ENCODE measurements at regions of chr6 and their contacts with region 1.

Region 1: GRCh38 chr6:80742481-80742880 is 636.0 kb downstream of the BCKDHB start:
- DNase-seq: peak; percentile 19
- H3K4me3 ChIP-seq: no peak overlapping the region
- H3K27ac ChIP-seq: no peak overlapping the region
- H3K4me1 ChIP-seq: no peaks in the 10 kb centered on the region
- H3K27me3 ChIP-seq: no peaks in the 10 kb centered on the region
- CTCF ChIP-seq: peak; percentile 16 to 47

Region 2: DNA sequence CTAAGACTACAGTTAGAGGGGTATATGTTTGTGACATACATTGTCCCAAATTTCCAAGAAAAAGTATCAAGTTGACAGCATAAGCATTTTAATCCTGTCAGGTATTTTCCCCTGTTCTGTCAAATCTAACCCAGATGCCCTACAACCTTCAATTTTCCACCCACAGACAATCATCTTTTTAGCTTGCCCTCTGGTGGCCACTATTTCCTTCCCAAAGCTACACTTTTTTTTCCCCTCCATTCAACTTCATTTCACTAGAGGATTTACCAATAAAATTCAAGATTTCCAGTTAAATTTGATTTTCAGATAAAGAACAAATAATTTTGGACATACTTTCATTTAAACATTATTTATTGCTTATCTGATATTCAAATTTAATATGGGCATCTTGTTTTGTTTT is 723.4 kb after region 1 on chr6:
- CTCF ChIA-PET with region 1: no interaction called
- dilution Hi-C with region 1: no loop called
- in situ Hi-C with region 1: no loop called
- intact Hi-C with region 1: loop called (anchors 2 kb)
- DNase-seq: peak; percentile 4
- H3K4me3 ChIP-seq: no peak overlapping the region
- H3K27ac ChIP-seq: no peak overlapping the region
- H3K4me1 ChIP-seq: no peaks in the 10 kb centered on the region
- H3K27me3 ChIP-seq: no peaks in the 10 kb centered on the region
- CTCF ChIP-seq: peak; percentile 54 to 61

Region 3: DNA sequence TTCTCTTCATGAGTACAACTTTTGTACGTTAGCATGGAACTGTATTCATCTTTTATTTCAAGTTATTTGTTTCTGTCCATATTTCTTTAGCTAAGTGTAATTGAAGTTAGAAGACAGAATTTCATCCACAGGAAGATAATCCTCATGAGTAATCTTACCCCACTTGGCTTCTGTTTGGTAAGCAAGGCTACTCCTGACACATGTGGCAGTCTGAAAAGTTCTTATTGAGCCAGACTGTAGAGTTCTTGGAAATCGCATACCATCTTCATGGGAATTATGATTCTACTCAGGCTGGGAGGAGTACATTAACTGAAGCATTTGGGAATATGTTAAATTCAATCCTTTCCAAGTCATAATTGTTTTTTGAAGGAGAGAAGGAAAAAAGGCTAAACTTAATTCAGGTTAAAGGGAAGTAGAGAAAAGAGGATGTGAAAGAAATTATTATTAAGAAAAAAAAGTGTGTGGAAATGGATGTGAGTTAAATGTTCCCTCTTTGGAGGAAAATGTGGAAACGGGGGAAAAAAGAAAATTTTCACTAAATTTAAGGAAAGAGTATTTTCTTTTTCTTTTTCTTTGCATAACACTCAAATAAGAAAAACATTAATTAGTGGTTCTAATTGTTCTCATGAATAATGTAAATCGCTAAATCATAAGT is 1051.5 kb after region 1 on chr6:
- CTCF ChIA-PET with region 1: interaction called, 11 read pairs
- dilution Hi-C with region 1: no loop called
- in situ Hi-C with region 1: no loop called
- intact Hi-C with region 1: no loop called
- DNase-seq: no peak
- H3K4me3 ChIP-seq: no peak overlapping the region
- H3K27ac ChIP-seq: no peak overlapping the region
- H3K4me1 ChIP-seq: no peaks in the 10 kb centered on the region
- H3K27me3 ChIP-seq: peaks cover 1% of the 10 kb centered on the region
- CTCF ChIP-seq: no peak